ENCODE measurements at regions of chr6 and their contacts with region 1.

Region 1: DNA sequence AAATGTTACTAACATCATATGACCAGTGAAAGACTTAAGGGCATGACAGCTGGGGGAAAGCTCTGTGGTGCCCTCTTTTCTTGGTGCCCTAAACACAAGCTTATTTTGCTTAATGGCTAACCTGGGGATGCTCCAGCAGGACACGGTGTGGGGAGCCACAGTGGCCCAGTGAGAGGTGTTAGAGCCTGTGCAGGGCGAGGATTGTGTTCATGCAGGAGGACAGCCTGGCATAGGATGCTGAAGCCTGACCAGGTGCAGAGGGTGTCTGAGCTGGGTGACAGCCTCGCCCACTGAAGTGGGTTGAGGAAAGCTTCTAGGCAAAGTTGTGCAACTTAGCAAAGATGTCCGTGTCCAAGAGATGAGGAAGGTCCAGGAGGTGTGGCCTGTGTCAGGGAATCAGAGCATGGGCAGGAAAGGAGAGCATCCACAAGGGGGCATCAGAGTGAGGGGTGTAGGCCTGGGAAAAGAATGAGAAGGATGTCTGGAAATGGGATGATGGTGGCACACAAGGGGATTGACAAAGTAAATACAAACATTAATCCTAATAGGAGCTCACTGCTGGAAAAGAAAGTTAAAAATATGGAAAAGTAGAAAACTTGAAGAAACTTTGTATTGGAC is 33.9 kb downstream of the SLC17A4 start:
- DNase-seq: peak; percentile 72
- H3K4me3 ChIP-seq: no peak overlapping the region
- H3K27ac ChIP-seq: no peak overlapping the region
- H3K4me1 ChIP-seq: no peaks in the 10 kb centered on the region
- H3K27me3 ChIP-seq: no peaks in the 10 kb centered on the region
- CTCF ChIP-seq: peak; percentile 71

Region 2: GRCh38 chr6:23980965-23981364 is 1807.4 kb before region 1 on chr6:
- CTCF ChIA-PET with region 1: no interaction called
- POLR2A ChIA-PET with region 1: no interaction called
- intact Hi-C with region 1: no loop called
- DNase-seq: peak; percentile 35
- H3K4me3 ChIP-seq: no peak overlapping the region
- H3K27ac ChIP-seq: no peak overlapping the region
- H3K4me1 ChIP-seq: no peaks in the 10 kb centered on the region
- H3K27me3 ChIP-seq: no peaks in the 10 kb centered on the region
- CTCF ChIP-seq: no peak

Region 3: DNA sequence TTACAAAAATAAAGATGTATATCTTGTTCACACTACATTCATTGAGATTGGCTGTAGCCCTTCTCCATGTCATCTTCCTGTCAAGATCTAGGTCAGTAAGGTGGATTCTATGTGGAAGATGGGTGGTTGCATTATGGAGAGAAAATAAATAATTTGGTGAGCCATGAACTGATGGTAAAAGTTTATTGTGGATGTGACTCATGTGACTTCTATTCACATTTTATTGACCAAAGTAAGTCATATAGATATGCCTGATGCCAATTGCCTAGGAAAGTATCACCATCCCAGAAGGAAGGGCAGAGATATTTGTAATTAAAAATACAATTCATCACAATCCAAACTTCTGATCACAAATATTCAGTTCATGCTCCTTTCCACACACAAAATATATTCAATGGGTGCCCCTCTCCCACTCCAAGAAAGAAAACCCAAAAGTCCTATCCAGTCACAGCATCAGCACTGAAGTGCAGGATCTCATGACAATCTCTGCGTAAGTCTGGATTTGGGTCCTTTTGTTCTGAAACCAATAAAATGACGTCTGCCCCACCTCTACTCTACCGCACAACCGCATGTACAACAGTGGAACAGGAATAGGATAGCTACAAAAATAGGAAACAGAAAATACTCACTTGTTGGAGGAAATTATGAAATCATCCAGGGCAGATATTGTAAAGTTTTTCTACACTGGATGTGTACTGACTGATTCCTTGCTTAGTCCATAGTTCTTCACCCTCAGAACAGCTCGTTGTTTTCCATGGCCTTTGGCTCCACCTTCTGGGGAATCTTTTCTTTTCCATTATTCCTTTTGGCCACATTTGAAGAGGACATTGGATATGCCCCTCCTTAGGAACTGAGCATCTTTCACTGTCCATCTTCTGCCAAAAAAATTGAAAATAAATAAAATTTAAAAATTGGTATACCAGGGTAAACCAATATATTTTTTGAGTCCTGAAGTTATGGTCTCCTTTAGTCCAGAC is 101.8 kb after region 1 on chr6:
- CTCF ChIA-PET with region 1: no interaction called
- POLR2A ChIA-PET with region 1: no interaction called
- intact Hi-C with region 1: loop called (anchors 5 kb)
- DNase-seq: peak; percentile 66
- H3K4me3 ChIP-seq: no peak overlapping the region
- H3K27ac ChIP-seq: no peak overlapping the region
- H3K4me1 ChIP-seq: no peaks in the 10 kb centered on the region
- H3K27me3 ChIP-seq: no peaks in the 10 kb centered on the region
- CTCF ChIP-seq: peak; percentile 58

Region 4: GRCh38 chr6:25942561-25943147 is 154.2 kb after region 1 on chr6:
- CTCF ChIA-PET with region 1: no interaction called
- POLR2A ChIA-PET with region 1: no interaction called
- intact Hi-C with region 1: loop called (anchors 1 kb)
- DNase-seq: peak; percentile 56
- H3K4me3 ChIP-seq: no peak overlapping the region
- H3K27ac ChIP-seq: no peak overlapping the region
- H3K4me1 ChIP-seq: no peaks in the 10 kb centered on the region
- H3K27me3 ChIP-seq: no peaks in the 10 kb centered on the region
- CTCF ChIP-seq: peak; percentile 73

Measured in A673 (cell line).